Tibial artery (tissue), 4 donors: ENCODE measurements at regions of chr22 and their contacts with region 1.

Region 1: GRCh38 chr22:45435544-45436139 is 22.1 kb downstream of the RIBC2 start:
- DNase-seq: peak; percentile 90 to 94
- H3K4me3 ChIP-seq: no peak overlapping the region
- H3K27ac ChIP-seq: peak overlapping the region; percentile 46 to 65
- H3K4me1 ChIP-seq: peaks cover 0 to 10% (median 6%) of the 10 kb centered on the region in 4 donors
- H3K27me3 ChIP-seq: no peaks in the 10 kb centered on the region
- CTCF ChIP-seq: peak; percentile 95 to 99

Region 2: GRCh38 chr22:45268958-45269844 is 166.4 kb before region 1 on chr22:
- intact Hi-C with region 1: loop called (anchors 2 kb)
- DNase-seq: peak; percentile 79 to 85
- H3K4me3 ChIP-seq: peak overlapping the region; percentile 55
- H3K27ac ChIP-seq: peak overlapping the region; percentile 64 to 69
- H3K4me1 ChIP-seq: peaks cover 3 to 43% (median 30%) of the 10 kb centered on the region in 4 donors
- H3K27me3 ChIP-seq: no peaks in the 10 kb centered on the region
- CTCF ChIP-seq: peak; percentile 89 to 97

Region 3: GRCh38 chr22:45329530-45329936 is 106.1 kb before region 1 on chr22:
- intact Hi-C with region 1: loop called (anchors 10 kb)
- DNase-seq: no peak
- H3K4me3 ChIP-seq: no peak overlapping the region
- H3K27ac ChIP-seq: no peak overlapping the region
- H3K4me1 ChIP-seq: peaks cover 0 to 3% (median under 1%) of the 10 kb centered on the region in 4 donors
- H3K27me3 ChIP-seq: no peaks in the 10 kb centered on the region
- CTCF ChIP-seq: no peak